Natural killer cell (primary cell): ENCODE measurements at regions of chr18 and their contacts with region 1.

Region 1: DNA sequence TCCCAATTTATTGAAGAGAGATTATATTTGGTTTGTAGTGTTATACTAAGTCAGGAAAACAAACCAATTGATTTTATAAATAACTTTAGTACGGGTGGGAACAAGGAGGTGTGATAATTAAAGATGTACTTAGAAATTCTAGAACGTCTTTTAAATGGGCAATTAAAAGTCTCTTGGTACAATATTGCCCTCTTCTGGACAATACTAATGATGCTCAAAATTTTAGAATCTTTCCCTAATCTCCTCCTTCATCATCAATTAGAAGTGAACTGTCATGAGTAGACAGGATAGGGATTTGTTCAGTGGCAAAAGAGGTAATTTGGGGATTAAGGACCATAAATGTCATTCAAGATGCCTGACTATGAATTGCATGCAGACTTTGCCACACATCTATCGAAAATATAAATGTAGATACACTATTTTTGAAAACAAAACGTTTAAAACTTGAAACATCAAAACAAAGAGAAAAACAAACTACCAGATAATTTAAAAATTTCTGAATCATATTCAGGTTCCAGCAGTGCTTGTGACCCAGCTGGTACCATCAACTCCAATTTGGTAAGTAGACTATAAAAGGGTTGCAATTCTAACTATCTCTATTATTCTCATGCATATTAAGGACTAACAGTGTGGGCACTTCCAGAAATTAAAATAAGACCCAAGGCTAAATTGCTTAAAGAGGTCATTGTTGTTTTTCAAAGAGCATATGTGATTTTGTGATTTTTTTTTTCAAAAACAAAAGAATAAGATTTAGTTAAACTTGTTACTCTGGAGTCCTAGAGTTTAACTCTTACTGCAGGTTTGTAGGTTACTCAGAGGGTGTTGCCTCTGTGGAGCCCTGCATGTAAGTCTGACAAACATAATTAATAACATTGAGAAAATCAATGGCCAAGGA is 123.5 kb downstream of the LAMA3 start:
- DNase-seq: peak in 1 of 2 donors; percentile 60
- ATAC-seq: peak in 2 of 3 donors; percentile 59
- H3K4me3 ChIP-seq: no peak overlapping the region
- H3K4me3 Mint-ChIP-seq: no peak overlapping the region
- H3K27ac ChIP-seq: no peak overlapping the region
- H3K27ac Mint-ChIP-seq: no peak overlapping the region
- H3K4me1 ChIP-seq: peaks cover 2% of the 10 kb centered on the region
- H3K4me1 Mint-ChIP-seq: peaks cover 0 to 9% of the 10 kb centered on the region in 2 donors
- H3K27me3 ChIP-seq: no peaks in the 10 kb centered on the region
- H3K27me3 Mint-ChIP-seq: peaks cover 0 to 10% of the 10 kb centered on the region in 2 donors
- CTCF ChIP-seq: peak; percentile 72

Region 2: GRCh38 chr18:23515911-23516546 is 296.8 kb before region 1 on chr18:
- intact Hi-C with region 1: loop called (anchors 5 kb)
- DNase-seq: peak; percentile 57 to 89
- ATAC-seq: peak; percentile 95 to 99 (median 98)
- H3K4me3 ChIP-seq: no peak overlapping the region
- H3K4me3 Mint-ChIP-seq: no peak overlapping the region
- H3K27ac ChIP-seq: no peak overlapping the region
- H3K27ac Mint-ChIP-seq: peak overlapping the region; percentile 58 to 59
- H3K4me1 ChIP-seq: peaks cover 3% of the 10 kb centered on the region
- H3K4me1 Mint-ChIP-seq: peaks cover 13 to 19% of the 10 kb centered on the region in 2 donors
- H3K27me3 ChIP-seq: no peaks in the 10 kb centered on the region
- H3K27me3 Mint-ChIP-seq: no peaks in the 10 kb centered on the region
- CTCF ChIP-seq: peak; percentile 79

Region 3: DNA sequence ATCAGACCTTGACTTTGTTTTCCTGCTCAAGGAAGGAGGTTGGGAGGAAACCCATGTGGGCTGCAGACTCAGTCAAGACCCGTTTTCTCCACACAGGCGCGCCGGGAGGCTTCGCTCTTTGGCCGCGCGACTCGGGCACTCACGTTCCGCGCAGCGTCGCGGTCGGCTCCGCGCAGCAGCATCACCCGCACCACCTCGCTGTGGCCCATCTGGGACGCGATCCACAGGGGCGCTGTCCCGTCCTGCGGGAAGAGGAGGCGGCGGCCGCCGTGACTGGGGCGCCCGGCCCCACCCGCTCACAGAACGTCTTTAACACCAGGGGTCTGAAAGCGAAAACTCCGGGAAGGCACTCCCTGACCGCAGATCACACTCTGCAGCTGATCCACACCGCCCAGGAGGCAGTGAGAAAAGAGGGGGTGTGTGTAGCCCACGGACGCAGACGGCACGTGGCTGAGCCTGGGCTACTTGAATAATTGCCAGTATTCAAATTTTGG is 193.4 kb before region 1 on chr18:
- intact Hi-C with region 1: loop called (anchors 1 kb)
- DNase-seq: peak; percentile 20 to 30
- ATAC-seq: peak; percentile 61 to 76 (median 72)
- H3K4me3 ChIP-seq: no peak overlapping the region
- H3K4me3 Mint-ChIP-seq: peak overlapping the region; percentile 68
- H3K27ac ChIP-seq: no peak overlapping the region
- H3K27ac Mint-ChIP-seq: no peak overlapping the region
- H3K4me1 ChIP-seq: peaks cover 11% of the 10 kb centered on the region
- H3K4me1 Mint-ChIP-seq: peaks cover 16 to 25% of the 10 kb centered on the region in 2 donors
- H3K27me3 ChIP-seq: peaks cover 26% of the 10 kb centered on the region
- H3K27me3 Mint-ChIP-seq: peaks cover 37 to 43% of the 10 kb centered on the region in 2 donors
- CTCF ChIP-seq: no peak

Region 4: DNA sequence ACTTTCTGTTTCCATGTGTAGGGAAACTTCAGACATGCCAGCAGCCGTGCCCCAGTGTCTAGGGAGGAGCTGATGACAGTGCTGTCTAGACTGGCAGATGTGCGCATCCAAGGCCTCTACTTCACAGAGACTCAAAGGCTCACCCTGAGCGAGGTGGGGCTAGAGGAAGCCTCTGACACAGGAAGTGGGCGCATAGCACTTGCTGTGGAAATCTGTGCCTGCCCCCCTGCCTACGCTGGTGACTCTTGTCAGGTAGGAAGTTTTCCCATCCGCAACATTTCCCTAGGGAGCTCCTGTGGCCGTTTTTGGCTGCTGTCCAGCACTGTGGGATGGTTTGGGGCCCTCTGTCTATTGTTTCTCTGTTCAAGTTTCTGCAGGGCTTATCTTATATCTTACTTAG is 58.6 kb after region 1 on chr18:
- intact Hi-C with region 1: no loop called
- DNase-seq: peak; percentile 61 to 89
- ATAC-seq: peak; percentile 96 to 99 (median 98)
- H3K4me3 ChIP-seq: no peak overlapping the region
- H3K4me3 Mint-ChIP-seq: peak overlapping the region; percentile 83
- H3K27ac ChIP-seq: peak overlapping the region; percentile 22
- H3K27ac Mint-ChIP-seq: peak overlapping the region; percentile 88 to 89
- H3K4me1 ChIP-seq: peaks cover 34% of the 10 kb centered on the region
- H3K4me1 Mint-ChIP-seq: peaks cover 42 to 48% of the 10 kb centered on the region in 2 donors
- H3K27me3 ChIP-seq: no peaks in the 10 kb centered on the region
- H3K27me3 Mint-ChIP-seq: peaks cover 0 to 2% of the 10 kb centered on the region in 2 donors
- CTCF ChIP-seq: no peak

Region 5: GRCh38 chr18:23918401-23919032 is 105.7 kb after region 1 on chr18:
- intact Hi-C with region 1: loop called (anchors 1 kb)
- DNase-seq: peak; percentile 75 to 90
- ATAC-seq: peak; percentile 72 to 91 (median 87)
- H3K4me3 ChIP-seq: no peak overlapping the region
- H3K4me3 Mint-ChIP-seq: no peak overlapping the region
- H3K27ac ChIP-seq: no peak overlapping the region
- H3K27ac Mint-ChIP-seq: peak overlapping the region; percentile 22 to 75
- H3K4me1 ChIP-seq: peaks cover 6% of the 10 kb centered on the region
- H3K4me1 Mint-ChIP-seq: peaks cover 13 to 17% of the 10 kb centered on the region in 2 donors
- H3K27me3 ChIP-seq: peaks cover 3% of the 10 kb centered on the region
- H3K27me3 Mint-ChIP-seq: peaks cover 15 to 17% of the 10 kb centered on the region in 2 donors
- CTCF ChIP-seq: peak; percentile 93